ENCODE measurements at regions of chr3 and their contacts with region 1.

Region 1: GRCh38 chr3:57587905-57588304 is 9.2 kb downstream of the ARF4 start:
- DNase-seq: no peak
- ATAC-seq: no peak
- H3K4me3 Mint-ChIP-seq: no peak overlapping the region
- H3K27ac Mint-ChIP-seq: no peak overlapping the region
- H3K4me1 Mint-ChIP-seq: peaks cover 31% of the 10 kb centered on the region
- H3K27me3 Mint-ChIP-seq: no peaks in the 10 kb centered on the region
- CTCF ChIP-seq: no peak

Region 2: DNA sequence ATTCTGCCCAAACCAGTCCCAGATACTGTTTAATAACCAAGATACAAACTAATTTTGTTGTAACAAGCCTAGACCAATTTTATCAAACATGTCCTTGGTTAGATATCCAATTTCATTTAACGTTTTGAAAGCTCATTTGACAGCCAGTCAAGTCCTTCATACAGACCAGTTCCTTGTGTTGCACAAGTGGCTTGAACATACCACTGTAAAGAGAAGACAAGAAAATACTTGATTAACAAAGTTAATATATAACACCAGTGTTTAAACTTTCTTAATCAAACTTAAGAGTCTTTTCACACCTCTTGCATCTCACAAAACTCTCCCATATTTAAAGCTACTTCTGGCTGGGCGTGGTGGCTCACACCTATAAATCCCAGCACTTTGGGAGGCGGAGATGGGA is 15.8 kb before region 1 on chr3:
- CTCF ChIA-PET with region 1: no interaction called
- POLR2A ChIA-PET with region 1: interaction called, 5 read pairs
- intact Hi-C with region 1: loop called (anchors 2 kb)
- DNase-seq: no peak
- ATAC-seq: no peak
- H3K4me3 Mint-ChIP-seq: no peak overlapping the region
- H3K27ac Mint-ChIP-seq: no peak overlapping the region
- H3K4me1 Mint-ChIP-seq: peaks cover 1% of the 10 kb centered on the region
- H3K27me3 Mint-ChIP-seq: no peaks in the 10 kb centered on the region
- CTCF ChIP-seq: no peak

Region 3: GRCh38 chr3:57755668-57756527 is 168.0 kb after region 1 on chr3 and contains the start of gene SLMAP:
- CTCF ChIA-PET with region 1: no interaction called
- POLR2A ChIA-PET with region 1: no interaction called
- intact Hi-C with region 1: no loop called
- DNase-seq: peak; percentile 87
- ATAC-seq: peak; percentile 94
- H3K4me3 Mint-ChIP-seq: peak within 1 kb of the TSS; percentile 95
- H3K27ac Mint-ChIP-seq: peak within 1 kb of the TSS; percentile 94
- H3K4me1 Mint-ChIP-seq: peaks cover 39% of the 10 kb centered on the region
- H3K27me3 Mint-ChIP-seq: no peaks in the 10 kb centered on the region
- CTCF ChIP-seq: no peak
- total RNA-seq, gene SLMAP: 45.4 and 57.1 TPM in 2 replicates

Measured in activated B cell treated with CpG ODN at 0.5 μM for 24 hours (primary cell).